Activated CD8-positive, alpha-beta T cell treated with anti-CD3 and anti-CD28 coated beads for 36 hours (primary cell): ENCODE measurements at regions of chr12 and their contacts with region 1.

Region 1: GRCh38 chr12:107402041-107403022 is 283.3 kb upstream of the PWP1 start:
- DNase-seq: peak; percentile 84
- ATAC-seq: peak; percentile 81
- H3K4me3 Mint-ChIP-seq: no peak overlapping the region
- H3K27ac Mint-ChIP-seq: no peak overlapping the region
- H3K4me1 Mint-ChIP-seq: peaks cover 38% of the 10 kb centered on the region
- H3K27me3 Mint-ChIP-seq: no peaks in the 10 kb centered on the region
- CTCF ChIP-seq: peak; percentile 76

Region 2: DNA sequence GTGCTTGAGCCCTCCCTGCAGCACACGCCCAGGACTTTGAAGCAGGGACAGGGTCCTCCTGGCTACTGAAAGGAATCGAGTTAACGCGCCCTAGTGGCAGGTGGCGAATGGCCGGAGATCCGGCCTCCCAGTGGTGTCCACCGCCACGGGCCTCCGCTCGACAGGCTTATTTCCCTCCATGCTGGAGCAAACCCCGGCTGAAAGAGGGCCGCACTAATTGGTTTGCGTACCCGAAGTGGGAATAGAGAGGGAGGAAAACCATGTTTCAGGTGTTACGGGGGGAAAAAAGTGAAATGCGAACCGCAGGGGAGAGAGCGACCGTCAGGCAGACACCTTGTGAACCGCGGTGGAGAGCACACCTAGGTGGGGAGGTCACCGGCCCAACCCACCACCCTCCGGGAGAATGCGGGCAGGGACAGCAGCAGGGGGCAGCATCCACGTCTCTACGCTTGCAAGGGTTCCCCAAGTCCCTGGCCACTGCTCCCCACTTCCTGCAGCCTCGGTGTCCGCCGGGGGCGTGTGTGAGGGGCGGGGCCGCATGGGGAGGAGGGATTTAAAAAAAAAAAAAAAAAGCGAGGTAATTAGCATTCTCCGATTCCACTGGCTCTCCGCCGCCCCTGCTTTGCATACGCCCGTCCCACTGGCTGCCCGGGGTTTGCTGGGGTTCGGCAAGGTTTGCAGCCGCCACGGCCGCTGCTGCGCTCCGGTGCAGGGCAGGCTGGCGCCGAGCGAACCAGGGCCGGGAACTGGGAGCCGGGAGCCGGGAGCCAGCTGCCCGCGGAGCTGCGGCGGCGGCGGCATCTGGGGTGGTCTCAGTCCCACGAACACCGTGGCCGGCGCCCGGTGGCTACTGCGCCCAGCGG is 84.3 kb before region 1 on chr12:
- CTCF ChIA-PET with region 1: interaction called, 111 read pairs
- POLR2A ChIA-PET with region 1: interaction called, 6 read pairs
- intact Hi-C with region 1: loop called (anchors 2 kb)
- DNase-seq: peak; percentile 94
- ATAC-seq: peak; percentile 62
- H3K4me3 Mint-ChIP-seq: peak overlapping the region; percentile 90
- H3K27ac Mint-ChIP-seq: no peak overlapping the region
- H3K4me1 Mint-ChIP-seq: peaks cover 33% of the 10 kb centered on the region
- H3K27me3 Mint-ChIP-seq: peaks cover 12% of the 10 kb centered on the region
- CTCF ChIP-seq: peak; percentile 61

Region 3: DNA sequence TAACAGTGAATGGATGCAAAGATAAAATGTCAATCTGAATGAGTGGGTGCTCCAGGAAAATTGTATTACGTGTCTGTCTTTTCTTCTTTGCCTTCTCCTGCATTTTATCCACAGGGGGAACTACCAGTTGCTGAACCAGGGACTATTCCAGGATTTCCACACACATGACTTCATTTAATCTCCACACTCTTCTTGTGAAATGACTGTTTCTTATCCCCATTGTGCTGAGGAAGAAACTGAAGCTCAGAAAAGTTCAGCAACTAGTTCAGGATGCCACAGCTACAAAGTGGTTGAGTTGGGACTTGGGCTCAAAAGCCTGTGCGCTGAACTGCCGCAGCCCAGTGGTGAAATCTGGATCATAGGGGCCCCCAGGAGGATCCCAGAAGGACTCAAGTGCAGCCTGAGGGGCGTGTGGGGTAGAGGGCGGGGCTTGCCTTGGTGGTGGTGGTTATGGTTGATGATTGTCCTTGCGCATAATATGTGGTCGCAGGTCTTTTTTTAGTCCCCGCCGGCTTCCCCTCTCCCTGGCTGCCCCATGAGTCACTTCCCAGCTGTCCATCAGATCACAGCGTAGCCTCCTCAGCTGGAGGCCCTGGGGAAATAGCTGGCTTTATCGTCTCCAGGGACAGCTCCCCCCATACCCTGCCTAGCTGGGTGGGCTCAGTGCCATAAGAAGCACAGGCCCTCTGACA is 73.7 kb before region 1 on chr12:
- CTCF ChIA-PET with region 1: interaction called, 111 read pairs
- POLR2A ChIA-PET with region 1: interaction called, 3 read pairs
- intact Hi-C with region 1: no loop called
- DNase-seq: peak; percentile 73
- ATAC-seq: peak; percentile 47
- H3K4me3 Mint-ChIP-seq: no peak overlapping the region
- H3K27ac Mint-ChIP-seq: peak overlapping the region; percentile 89
- H3K4me1 Mint-ChIP-seq: peaks cover 86% of the 10 kb centered on the region
- H3K27me3 Mint-ChIP-seq: no peaks in the 10 kb centered on the region
- CTCF ChIP-seq: no peak

Region 4: DNA sequence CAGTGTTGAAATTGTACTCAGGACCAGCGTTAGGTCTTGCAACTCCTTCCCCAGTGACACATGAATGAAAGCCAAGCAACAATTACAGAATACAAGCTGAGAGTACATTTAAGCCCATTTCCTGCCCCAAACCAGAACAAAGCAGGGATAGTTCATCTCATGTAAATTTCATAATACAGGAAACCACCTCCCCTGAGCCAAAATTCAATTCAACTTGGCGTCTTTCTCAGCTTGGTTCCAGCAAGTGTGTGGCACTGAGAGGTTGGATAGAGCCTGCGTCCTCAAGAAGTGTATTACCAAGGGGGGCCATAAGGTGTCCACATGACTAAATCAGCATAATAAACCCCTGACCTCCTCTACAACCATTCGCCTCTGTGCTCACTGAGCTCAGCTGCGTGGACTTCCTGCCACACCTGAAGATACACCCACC is 30.1 kb before region 1 on chr12:
- CTCF ChIA-PET with region 1: interaction called, 12 read pairs
- POLR2A ChIA-PET with region 1: interaction called, 6 read pairs
- intact Hi-C with region 1: no loop called
- DNase-seq: peak; percentile 64
- ATAC-seq: peak; percentile 64
- H3K4me3 Mint-ChIP-seq: peak overlapping the region; percentile 24
- H3K27ac Mint-ChIP-seq: peak overlapping the region; percentile 98
- H3K4me1 Mint-ChIP-seq: peaks cover 73% of the 10 kb centered on the region
- H3K27me3 Mint-ChIP-seq: no peaks in the 10 kb centered on the region
- CTCF ChIP-seq: no peak

Region 5: GRCh38 chr12:107390414-107390813 is 11.9 kb before region 1 on chr12:
- CTCF ChIA-PET with region 1: interaction called, 10 read pairs
- POLR2A ChIA-PET with region 1: no interaction called
- intact Hi-C with region 1: no loop called
- DNase-seq: no peak
- ATAC-seq: no peak
- H3K4me3 Mint-ChIP-seq: no peak overlapping the region
- H3K27ac Mint-ChIP-seq: peak overlapping the region; percentile 6
- H3K4me1 Mint-ChIP-seq: peaks cover 79% of the 10 kb centered on the region
- H3K27me3 Mint-ChIP-seq: no peaks in the 10 kb centered on the region
- CTCF ChIP-seq: no peak

Region 6: GRCh38 chr12:107607464-107608392 is 205.4 kb after region 1 on chr12:
- CTCF ChIA-PET with region 1: interaction called, 75 read pairs
- POLR2A ChIA-PET with region 1: no interaction called
- intact Hi-C with region 1: loop called (anchors 2 kb)
- DNase-seq: peak; percentile 86
- ATAC-seq: peak; percentile 81
- H3K4me3 Mint-ChIP-seq: no peak overlapping the region
- H3K27ac Mint-ChIP-seq: no peak overlapping the region
- H3K4me1 Mint-ChIP-seq: no peaks in the 10 kb centered on the region
- H3K27me3 Mint-ChIP-seq: no peaks in the 10 kb centered on the region
- CTCF ChIP-seq: peak; percentile 87